Activated CD4-positive, alpha-beta T cell treated with anti-CD3 and anti-CD28 coated beads, Interleukin-2, amount 10 ng/mL, durations not matched to agents 24 days and 14 days (primary cell): ENCODE measurements at regions of chr11 and their contacts with region 1.

Region 1: GRCh38 chr11:104151404-104152204 is 12.3 kb downstream of the PDGFD start:
- DNase-seq: no peak
- H3K4me3 Mint-ChIP-seq: no peak overlapping the region
- H3K27ac Mint-ChIP-seq: no peak overlapping the region
- H3K4me1 Mint-ChIP-seq: no peaks in the 10 kb centered on the region
- H3K27me3 Mint-ChIP-seq: no peaks in the 10 kb centered on the region

Region 2: DNA sequence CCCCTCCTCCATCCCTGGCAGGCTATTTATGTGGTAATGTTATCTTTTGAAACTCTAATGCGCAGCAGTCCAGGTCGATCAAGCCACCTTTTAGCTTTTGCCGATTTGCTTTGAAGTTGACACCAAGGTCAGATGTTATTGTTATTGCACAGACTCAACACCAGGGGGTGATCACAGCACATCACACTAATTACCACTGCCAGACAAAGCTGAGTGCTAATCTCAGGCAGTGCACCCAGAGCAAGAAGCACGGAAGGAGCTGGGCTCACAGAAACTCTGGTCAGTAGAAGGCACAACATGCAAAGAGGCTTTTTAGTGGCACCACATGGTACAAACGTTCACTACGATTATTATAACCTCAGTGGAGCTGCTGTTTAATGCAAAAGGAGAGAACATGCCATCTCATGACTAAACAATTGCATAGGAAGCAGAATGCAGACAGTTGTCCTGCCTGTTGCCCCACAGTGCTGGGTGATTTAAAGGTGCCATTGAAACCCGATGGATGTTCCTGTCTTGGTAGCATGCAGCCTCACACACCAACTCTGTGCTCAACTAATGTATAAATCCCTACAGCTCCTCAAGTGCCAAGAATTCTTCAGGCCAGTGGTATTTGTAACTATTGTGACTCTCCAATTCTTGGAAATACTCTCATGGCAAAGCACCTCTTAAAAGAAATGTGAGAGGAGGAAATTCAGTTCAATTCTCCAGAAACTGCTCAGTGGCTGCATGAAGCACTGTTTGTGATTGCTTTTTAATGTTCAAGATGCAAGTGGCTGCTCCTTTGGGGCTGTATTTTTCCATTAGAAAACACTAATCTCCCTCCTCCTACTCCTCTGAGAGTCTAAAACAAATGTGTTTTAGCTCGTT is 469.1 kb before region 1 on chr11:
- intact Hi-C with region 1: loop called (anchors 5 kb)
- DNase-seq: peak; percentile 85
- H3K4me3 Mint-ChIP-seq: no peak overlapping the region
- H3K27ac Mint-ChIP-seq: no peak overlapping the region
- H3K4me1 Mint-ChIP-seq: peaks cover 5% of the 10 kb centered on the region
- H3K27me3 Mint-ChIP-seq: no peaks in the 10 kb centered on the region